Heart left ventricle (tissue), 16 donors: ENCODE measurements at regions of chr12 and their contacts with region 1.

Region 1: DNA sequence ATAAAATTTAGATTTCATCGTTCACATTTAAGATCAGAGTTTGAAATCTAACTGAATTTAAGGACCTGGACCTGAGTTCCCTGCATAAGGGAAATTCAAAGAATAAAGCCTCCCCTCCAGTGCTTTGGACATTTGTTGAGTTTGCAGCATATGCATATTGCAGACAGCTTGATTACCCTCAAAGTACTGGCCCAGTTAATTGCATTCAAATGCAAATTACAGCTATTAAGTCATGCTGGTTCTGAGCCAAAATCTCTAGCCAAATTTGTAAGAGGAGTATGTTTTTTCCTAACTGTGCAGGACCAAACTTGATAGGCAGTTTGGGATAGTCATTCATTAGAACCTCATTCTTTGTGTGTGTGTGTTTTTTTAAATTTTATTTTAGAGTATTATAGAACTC is 9.1 kb upstream of the KIF21A start:
- DNase-seq: no peak
- ATAC-seq: no peak
- H3K4me3 ChIP-seq: no peak overlapping the region
- H3K27ac ChIP-seq: no peak overlapping the region
- H3K4me1 ChIP-seq: no peaks in the 10 kb centered on the region
- H3K27me3 ChIP-seq: no peaks in the 10 kb centered on the region
- CTCF ChIP-seq: no peak
- POLR2A ChIP-seq: no peak

Region 2: DNA sequence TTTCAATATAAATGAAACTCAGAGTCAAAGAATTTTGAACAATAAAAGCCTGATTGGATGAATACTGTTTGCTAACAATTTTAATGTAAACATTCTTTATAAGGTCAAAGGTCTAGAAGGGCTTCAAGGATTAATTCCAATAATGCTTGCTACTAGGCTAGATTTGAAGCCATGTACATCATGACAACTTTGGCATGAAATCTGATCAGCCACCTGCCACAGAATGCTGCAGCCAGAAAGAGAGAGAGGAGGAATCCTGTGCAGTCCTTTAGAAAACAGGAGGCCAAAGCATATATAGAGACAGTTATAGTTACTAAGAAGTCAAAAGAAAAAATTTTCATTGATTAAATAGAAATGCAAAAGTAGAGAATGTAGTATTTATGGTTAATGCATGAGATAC is 120.6 kb after region 1 on chr12:
- intact Hi-C with region 1: loop called in 1 of 10 experiments (anchors 10 kb)
- DNase-seq: no peak
- ATAC-seq: no peak
- H3K4me3 ChIP-seq: no peak overlapping the region
- H3K27ac ChIP-seq: no peak overlapping the region
- H3K4me1 ChIP-seq: no peaks in the 10 kb centered on the region
- H3K27me3 ChIP-seq: no peaks in the 10 kb centered on the region
- CTCF ChIP-seq: no peak
- POLR2A ChIP-seq: no peak